ENCODE measurements at regions of chr14 and their contacts with region 1.

Region 1: DNA sequence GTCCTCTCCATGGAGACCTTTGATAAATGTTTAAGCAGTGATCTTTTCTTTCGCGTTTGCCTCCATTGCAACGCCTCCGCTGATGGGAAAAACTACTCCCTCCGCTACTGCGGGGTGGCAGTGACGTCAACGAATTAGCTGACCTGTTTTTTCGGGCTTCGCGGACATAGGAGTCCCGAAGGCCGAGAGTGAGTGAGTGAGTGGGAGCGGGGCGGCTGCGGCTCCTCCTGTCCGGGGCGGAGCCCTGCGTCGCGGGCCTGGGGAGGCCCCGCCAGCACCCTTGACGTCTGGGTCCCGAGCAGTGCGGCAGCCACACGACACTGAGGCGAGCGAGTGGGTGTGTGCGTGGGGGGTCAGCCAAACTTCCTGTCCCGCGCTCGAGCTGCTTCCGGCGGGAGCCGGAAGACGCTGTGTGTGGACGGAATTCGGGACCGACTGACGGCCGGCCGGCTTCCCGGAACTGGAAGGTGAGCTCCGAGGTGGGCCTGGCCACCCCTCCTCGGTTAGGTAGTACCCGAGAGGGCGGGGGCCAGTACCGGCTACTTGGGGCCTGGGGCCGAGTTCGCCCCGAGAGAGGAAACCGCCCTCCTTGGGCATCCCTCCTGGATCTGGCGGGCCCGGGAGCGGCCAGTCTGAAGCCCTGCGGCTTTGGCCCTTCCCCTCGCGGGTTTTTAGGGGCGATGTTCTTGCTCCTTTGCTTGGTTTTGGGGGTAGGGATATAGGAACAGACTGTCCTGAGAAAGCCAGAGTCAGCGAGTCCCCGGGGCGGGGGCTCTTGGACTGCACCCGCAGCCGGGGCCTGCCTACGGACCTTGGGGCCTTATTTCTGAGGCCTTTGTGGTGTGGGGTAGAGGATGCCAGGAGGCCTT is at the start of gene ZNF410:
- DNase-seq: peak; percentile 88
- ATAC-seq: peak; percentile 99
- H3K4me3 Mint-ChIP-seq: peak within 1 kb of the TSS; percentile 97
- H3K27ac Mint-ChIP-seq: peak within 1 kb of the TSS; percentile 97
- H3K4me1 Mint-ChIP-seq: peaks cover 37% of the 10 kb centered on the region
- H3K27me3 Mint-ChIP-seq: no peaks in the 10 kb centered on the region
- total RNA-seq, gene ZNF410: 49.7 to 50.2 TPM

Region 2: GRCh38 chr14:73851644-73852382 is 34.9 kb before region 1 on chr14 and contains the start of gene PTGR2:
- CTCF ChIA-PET with region 1: no interaction called
- POLR2A ChIA-PET with region 1: interaction called, 12 read pairs
- DNase-seq: peak; percentile 93
- ATAC-seq: peak; percentile 98
- H3K4me3 Mint-ChIP-seq: peak within 1 kb of the TSS; percentile 96
- H3K27ac Mint-ChIP-seq: peak within 1 kb of the TSS; percentile 96
- H3K4me1 Mint-ChIP-seq: peaks cover 24% of the 10 kb centered on the region
- H3K27me3 Mint-ChIP-seq: peaks cover 4% of the 10 kb centered on the region
- total RNA-seq, gene PTGR2: 1.4 to 1.8 TPM